Activated B cell treated with CpG ODN at 0.5 μM for 24 hours (primary cell): ENCODE measurements at regions of chr10 and their contacts with region 1.

Region 1: DNA sequence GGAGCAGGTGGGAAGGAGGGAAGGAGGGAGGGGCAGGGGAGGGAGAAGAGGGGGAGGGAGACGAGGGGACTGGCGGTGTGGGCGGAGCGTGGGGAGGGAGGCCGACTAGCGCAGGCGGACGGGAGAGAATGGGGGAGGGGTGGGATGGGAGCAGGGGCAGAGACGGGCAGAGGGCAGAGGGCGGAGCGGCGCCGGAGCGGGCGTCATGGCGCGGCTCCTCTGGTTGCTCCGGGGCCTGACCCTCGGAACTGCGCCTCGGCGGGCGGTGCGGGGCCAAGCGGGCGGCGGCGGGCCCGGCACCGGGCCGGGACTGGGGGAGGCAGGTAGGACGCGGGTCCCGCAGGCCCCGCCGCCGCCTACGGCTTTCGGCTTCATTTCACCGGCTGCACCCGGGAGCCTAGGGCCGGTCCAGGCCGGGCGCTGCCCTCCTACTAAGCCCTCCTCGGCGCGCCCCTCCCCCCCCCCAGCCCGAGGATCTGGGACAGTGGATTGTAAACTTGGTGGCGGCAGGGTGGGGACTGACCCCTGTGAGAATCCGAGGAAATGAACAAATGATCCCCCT is at the start of gene MSRB2:
- DNase-seq: peak; percentile 47
- ATAC-seq: peak; percentile 81
- H3K4me3 Mint-ChIP-seq: peak within 1 kb of the TSS; percentile 89
- H3K27ac Mint-ChIP-seq: peak within 1 kb of the TSS; percentile 77
- H3K4me1 Mint-ChIP-seq: peaks cover 17% of the 10 kb centered on the region
- H3K27me3 Mint-ChIP-seq: no peaks in the 10 kb centered on the region
- CTCF ChIP-seq: no peak
- total RNA-seq, gene MSRB2: 4.1 and 4.6 TPM in 2 replicates

Region 2: GRCh38 chr10:22003079-22003913 is 1092.2 kb before region 1 on chr10 and contains the start of gene DNAJC1:
- CTCF ChIA-PET with region 1: no interaction called
- POLR2A ChIA-PET with region 1: no interaction called
- intact Hi-C with region 1: loop called (anchors 2 kb)
- DNase-seq: peak; percentile 98
- ATAC-seq: peak; percentile 92
- H3K4me3 Mint-ChIP-seq: peak within 1 kb of the TSS; percentile 87
- H3K27ac Mint-ChIP-seq: peak within 1 kb of the TSS; percentile 91
- H3K4me1 Mint-ChIP-seq: peaks cover 41% of the 10 kb centered on the region
- H3K27me3 Mint-ChIP-seq: no peaks in the 10 kb centered on the region
- CTCF ChIP-seq: no peak
- total RNA-seq, gene DNAJC1: 9.2 and 10.9 TPM in 2 replicates

Region 3: DNA sequence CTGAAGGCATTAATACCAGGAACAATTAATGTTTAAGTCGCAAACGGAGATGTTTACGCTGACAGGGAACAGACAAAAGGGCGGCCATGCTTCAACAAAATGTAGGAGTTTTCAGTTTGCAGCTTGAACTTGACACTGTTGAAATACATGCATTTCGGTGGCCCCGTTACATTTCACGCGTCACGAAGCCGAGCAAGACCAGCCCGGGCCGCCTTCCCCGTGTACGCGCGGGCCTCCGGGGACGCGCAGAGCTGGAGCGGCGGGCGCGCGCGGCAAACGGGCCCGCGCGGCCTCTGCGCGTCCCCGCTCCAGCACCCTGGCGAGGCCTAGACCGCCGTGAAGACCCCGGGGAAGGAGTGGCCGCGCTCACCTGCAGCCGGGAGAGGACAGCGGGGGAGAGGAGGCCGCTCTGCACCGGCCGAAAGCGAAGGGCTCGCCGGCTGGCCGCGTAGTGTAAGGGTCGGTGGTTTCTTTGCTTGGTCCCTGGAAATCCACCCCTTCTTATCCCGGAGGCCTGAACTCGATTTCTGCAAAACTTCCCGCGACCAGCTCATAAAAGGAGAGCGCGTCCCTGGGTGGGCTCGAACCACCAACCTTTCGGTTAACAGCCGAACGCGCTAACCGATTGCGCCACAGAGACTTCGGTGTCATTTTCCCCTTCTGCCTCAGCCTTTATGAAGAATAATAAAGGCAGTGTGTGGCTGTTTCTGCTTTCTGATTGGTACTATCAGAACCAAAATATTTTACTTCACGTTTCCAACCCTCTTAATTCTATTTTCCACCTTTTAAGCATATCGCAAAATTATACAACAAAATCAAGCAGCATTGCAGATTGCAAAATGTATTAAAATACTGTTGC is 866.3 kb before region 1 on chr10:
- CTCF ChIA-PET with region 1: no interaction called
- POLR2A ChIA-PET with region 1: no interaction called
- intact Hi-C with region 1: loop called (anchors 10 kb)
- DNase-seq: peak; percentile 81
- ATAC-seq: peak; percentile 79
- H3K4me3 Mint-ChIP-seq: peak overlapping the region; percentile 88
- H3K27ac Mint-ChIP-seq: peak overlapping the region; percentile 96
- H3K4me1 Mint-ChIP-seq: peaks cover 15% of the 10 kb centered on the region
- H3K27me3 Mint-ChIP-seq: peaks cover 7% of the 10 kb centered on the region
- CTCF ChIP-seq: no peak

Region 4: GRCh38 chr10:23015021-23015707 is 80.3 kb before region 1 on chr10:
- CTCF ChIA-PET with region 1: no interaction called
- POLR2A ChIA-PET with region 1: no interaction called
- intact Hi-C with region 1: loop called (anchors 5 kb)
- DNase-seq: no peak
- ATAC-seq: peak; percentile 92
- H3K4me3 Mint-ChIP-seq: peak overlapping the region; percentile 56
- H3K27ac Mint-ChIP-seq: peak overlapping the region; percentile 75
- H3K4me1 Mint-ChIP-seq: peaks cover 16% of the 10 kb centered on the region
- H3K27me3 Mint-ChIP-seq: peaks cover 2% of the 10 kb centered on the region
- CTCF ChIP-seq: no peak

Region 5: DNA sequence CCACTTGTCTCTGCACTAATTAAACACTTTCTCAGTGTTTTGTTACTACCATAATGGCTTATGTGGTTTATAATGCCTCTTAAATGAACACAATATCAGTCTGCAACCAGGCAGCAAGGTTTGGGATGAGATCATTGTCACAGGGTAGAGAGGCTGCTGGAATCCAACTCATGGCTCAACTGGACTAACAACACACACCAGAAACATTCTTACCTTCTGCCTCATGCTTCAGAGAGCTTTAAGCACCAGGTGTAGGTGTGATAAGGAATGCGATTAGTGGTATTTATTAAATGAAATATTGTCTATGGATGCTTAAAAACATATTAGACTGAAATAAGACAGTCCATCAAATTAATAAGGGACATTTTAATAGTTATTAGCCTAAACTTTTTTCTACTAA is 122.0 kb after region 1 on chr10:
- CTCF ChIA-PET with region 1: no interaction called
- POLR2A ChIA-PET with region 1: no interaction called
- intact Hi-C with region 1: no loop called
- DNase-seq: no peak
- ATAC-seq: no peak
- H3K4me3 Mint-ChIP-seq: no peak overlapping the region
- H3K27ac Mint-ChIP-seq: no peak overlapping the region
- H3K4me1 Mint-ChIP-seq: no peaks in the 10 kb centered on the region
- H3K27me3 Mint-ChIP-seq: peaks cover 2% of the 10 kb centered on the region
- CTCF ChIP-seq: no peak

Region 6: GRCh38 chr10:23459344-23459939 is 364.0 kb after region 1 on chr10:
- CTCF ChIA-PET with region 1: no interaction called
- POLR2A ChIA-PET with region 1: no interaction called
- intact Hi-C with region 1: loop called (anchors 10 kb)
- DNase-seq: no peak
- ATAC-seq: no peak
- H3K4me3 Mint-ChIP-seq: no peak overlapping the region
- H3K27ac Mint-ChIP-seq: no peak overlapping the region
- H3K4me1 Mint-ChIP-seq: peaks cover 42% of the 10 kb centered on the region
- H3K27me3 Mint-ChIP-seq: no peaks in the 10 kb centered on the region
- CTCF ChIP-seq: no peak

Region 7: DNA sequence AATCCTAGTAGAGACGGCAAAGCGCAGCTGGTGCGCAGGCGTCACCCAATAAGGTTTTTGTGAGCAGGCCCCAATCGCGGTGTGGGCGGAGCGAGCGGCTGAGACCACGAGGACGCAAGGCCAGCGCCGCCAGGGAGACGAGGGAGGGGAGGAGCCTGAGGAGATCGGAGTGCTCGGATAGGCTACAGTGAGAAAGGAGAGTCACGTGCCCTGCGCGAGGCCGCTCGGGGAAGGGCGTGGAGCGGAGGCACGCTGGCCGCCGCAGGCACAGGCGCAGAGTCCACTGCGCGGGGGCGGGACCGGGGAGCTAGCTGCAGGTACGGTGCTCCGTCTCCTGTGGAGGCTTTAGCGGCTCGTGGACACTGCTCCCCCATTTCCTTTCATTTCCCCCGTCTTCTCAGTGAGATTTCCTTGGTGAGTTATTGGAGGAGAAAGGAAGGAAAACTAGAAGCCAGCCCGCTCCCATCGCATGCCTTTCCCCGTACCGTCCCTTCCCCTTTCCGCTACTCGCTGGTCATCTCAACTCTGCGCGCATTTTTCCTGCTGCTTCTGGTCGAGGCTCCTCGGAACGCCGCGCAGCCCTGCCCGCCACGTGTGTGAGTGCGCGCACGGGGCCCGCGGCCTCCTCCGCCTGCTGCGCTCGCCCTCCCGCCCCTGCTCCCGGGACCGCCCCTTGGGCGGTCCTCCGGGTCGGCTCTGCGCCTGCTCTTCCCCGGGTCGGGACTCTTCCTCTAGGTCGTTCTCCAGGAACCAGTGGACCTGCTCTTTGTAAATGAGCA is 1921.1 kb after region 1 on chr10 and contains the start of gene THNSL1:
- CTCF ChIA-PET with region 1: no interaction called
- POLR2A ChIA-PET with region 1: no interaction called
- intact Hi-C with region 1: loop called (anchors 2 kb)
- DNase-seq: peak; percentile 85
- ATAC-seq: peak; percentile 95
- H3K4me3 Mint-ChIP-seq: peak within 1 kb of the TSS; percentile 88
- H3K27ac Mint-ChIP-seq: peak within 1 kb of the TSS; percentile 93
- H3K4me1 Mint-ChIP-seq: peaks cover 27% of the 10 kb centered on the region
- H3K27me3 Mint-ChIP-seq: no peaks in the 10 kb centered on the region
- CTCF ChIP-seq: no peak
- total RNA-seq, gene THNSL1: 3.8 TPM in 2 replicates